PC-9 (cell line): ENCODE measurements at regions of chr3 and their contacts with region 1.

Region 1: GRCh38 chr3:110495201-110495927 is 576.3 kb upstream of the NECTIN3 start:
- DNase-seq: peak in 1 of 2 experiments; percentile 60
- H3K4me3 ChIP-seq: no peak overlapping the region
- H3K27ac ChIP-seq: no peak overlapping the region
- H3K4me1 ChIP-seq: no peaks in the 10 kb centered on the region
- H3K27me3 ChIP-seq: no peaks in the 10 kb centered on the region
- CTCF ChIP-seq: no peak

Region 2: GRCh38 chr3:110664148-110664547 is 168.8 kb after region 1 on chr3:
- CTCF ChIA-PET with region 1: no interaction called
- POLR2A ChIA-PET with region 1: no interaction called
- intact Hi-C with region 1: loop called (anchors 5 kb)
- DNase-seq: peak in 1 of 2 experiments; percentile 9
- H3K4me3 ChIP-seq: no peak overlapping the region
- H3K27ac ChIP-seq: no peak overlapping the region
- H3K4me1 ChIP-seq: no peaks in the 10 kb centered on the region
- H3K27me3 ChIP-seq: no peaks in the 10 kb centered on the region
- CTCF ChIP-seq: no peak